ENCODE measurements at regions of chr17 and their contacts with region 1.

Region 1: DNA sequence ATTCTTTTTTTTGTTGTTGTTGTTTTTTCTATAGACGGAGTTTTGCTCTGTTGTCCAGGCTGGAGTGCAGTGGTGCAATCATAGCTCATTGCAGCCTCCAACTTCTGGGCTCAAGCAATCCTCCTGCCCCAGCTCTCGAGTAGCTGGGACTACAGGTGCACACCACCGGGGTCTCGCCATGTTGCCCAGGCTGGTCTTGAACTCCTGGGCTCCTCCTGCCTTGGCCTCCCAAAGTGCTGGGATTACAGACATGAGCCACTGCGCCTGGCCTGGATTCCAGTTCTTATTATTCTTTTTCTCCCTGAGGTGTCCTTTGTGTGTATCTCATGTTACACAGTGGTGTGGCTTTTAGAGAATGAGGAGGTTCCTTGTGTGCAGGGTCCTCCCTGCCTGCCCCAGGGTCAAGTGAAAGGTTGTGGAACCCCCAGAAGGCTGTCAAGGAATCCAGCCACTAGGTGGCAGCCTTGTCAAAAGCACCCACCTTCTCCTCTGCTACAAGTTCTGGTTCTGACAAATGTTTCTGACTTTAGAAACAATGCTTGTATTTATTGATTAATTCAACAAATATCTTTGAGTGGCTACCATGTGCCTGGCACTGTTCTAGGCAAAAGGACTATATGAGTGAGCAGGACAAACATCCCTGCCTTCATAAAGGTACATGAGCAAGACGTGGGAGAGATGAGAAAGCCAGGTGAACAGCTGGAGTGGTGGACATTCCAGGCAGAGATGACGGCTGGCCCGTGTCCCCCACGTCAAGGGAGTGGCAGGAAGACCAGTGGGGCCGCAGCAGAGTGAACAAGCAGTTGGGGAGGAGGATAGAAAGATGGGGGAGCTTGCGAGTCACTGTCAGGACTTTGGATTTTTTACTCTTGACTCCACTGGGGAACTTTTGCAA is 112.4 kb downstream of the SPECC1 start:
- DNase-seq: peak; percentile 66
- ATAC-seq: peak; percentile 83

Region 2: DNA sequence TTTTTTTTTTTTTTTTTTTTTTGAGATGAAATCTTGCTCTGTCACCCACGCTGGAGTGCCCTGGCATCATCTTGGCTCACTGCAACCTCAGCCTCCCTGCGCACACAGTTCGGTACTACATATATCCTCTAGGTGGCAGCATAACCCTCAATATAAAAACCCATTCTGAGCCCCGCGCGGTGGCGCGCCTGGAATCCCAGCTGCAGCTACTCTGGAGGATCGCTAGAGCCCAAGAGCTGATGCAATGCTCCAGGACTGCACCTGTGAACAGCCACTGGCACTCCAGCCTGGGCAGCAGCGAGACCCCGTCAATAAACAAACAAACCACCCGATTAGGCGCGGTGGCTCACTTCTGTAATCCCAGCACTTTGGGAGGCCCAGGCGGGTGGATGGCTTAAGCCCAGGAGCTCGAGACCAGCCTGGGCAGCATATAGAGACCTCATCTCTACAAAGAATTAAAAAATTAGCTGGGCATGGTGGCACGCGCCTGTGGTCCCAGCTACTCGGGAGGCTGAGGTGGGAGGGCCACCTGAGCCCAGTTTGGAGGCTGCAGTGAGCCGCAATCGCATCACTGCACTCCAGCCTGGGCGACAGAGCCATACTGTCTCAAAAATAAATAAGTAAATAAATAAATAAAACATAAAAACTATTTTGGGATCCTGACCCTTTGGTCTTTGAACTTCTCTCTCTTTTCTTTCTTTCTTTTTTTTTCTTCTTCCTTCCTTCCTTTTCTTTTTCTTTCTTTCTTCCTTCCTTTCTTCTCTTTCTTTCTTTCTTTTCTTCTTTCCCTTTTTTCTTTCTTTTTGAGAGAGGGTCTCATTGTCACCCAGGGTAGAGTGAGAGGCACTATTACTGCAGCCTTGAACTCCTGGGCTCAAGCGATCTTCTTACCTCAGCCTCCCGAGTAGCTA is 128.5 kb before region 1 on chr17:
- intact Hi-C with region 1: loop called (anchors 5 kb)
- DNase-seq: peak; percentile 93
- ATAC-seq: peak; percentile 99

Region 3: DNA sequence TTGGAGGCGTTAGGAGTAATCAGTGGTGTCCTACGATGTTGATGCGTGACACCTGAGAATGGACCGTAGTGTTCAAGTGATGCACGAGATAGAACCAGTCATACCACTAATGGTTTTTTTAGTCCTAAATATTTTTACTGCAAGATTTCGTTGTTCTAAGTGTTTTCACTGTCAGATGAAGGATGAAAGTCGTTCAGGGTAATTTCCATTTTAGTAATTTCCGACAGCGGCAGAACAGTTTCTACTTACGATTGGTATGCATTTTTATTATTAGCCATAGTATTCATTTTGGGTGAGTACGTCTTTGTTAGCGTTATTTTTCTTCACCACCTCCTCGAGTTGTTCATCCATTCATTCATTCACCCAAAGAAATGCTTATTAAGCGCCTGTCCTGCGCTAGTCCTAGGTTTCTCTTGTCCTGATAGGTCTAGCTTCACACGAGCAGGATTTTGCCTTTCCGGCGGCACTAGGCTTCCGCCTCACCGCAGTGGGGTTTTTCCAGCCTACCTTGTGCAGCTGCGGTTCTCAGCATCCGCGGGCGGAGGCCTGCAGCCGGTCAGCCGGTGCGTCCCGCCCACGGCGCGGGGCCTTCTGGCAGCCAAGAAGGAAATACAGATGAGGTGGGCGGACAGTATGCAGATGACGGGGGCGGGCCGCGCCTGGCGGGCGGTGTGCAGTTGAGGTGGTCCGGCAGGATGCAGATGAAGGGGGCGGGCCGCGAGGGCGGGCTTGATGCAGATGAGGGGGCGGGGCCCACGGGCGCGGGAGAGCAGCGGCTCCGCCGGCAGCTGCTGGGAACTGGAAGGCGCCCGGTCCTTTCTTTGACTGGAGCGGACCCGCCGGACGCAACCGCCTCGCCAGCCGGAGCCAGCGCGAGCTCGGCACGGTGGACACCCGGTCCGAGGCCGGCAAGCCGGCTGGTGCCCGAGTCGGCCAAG is 33.9 kb after region 1 on chr17:
- intact Hi-C with region 1: no loop called
- DNase-seq: peak; percentile 99
- ATAC-seq: peak; percentile 100

Region 4: GRCh38 chr17:20315821-20316220 is 194.2 kb after region 1 on chr17:
- intact Hi-C with region 1: loop called (anchors 5 kb)
- DNase-seq: no peak
- ATAC-seq: no peak

Region 5: GRCh38 chr17:20955427-20956323 is 834.1 kb after region 1 on chr17:
- intact Hi-C with region 1: no loop called
- DNase-seq: no peak
- ATAC-seq: peak; percentile 85